Breast epithelium (tissue), 4 donors: ENCODE measurements at regions of chr3 and their contacts with region 1.

Region 1: GRCh38 chr3:88369337-88369736 is 219.6 kb downstream of the C3orf38 start:
- DNase-seq: no peak
- H3K4me3 ChIP-seq: no peak overlapping the region
- H3K27ac ChIP-seq: no peak overlapping the region
- H3K4me1 ChIP-seq: no peaks in the 10 kb centered on the region
- H3K27me3 ChIP-seq: no peaks in the 10 kb centered on the region
- CTCF ChIP-seq: no peak
- POLR2A ChIP-seq: no peak

Region 2: GRCh38 chr3:88398581-88398980 is 29.2 kb after region 1 on chr3:
- intact Hi-C with region 1: loop called (anchors 2 kb)
- DNase-seq: no peak
- H3K4me3 ChIP-seq: no peak overlapping the region
- H3K27ac ChIP-seq: no peak overlapping the region
- H3K4me1 ChIP-seq: no peaks in the 10 kb centered on the region
- H3K27me3 ChIP-seq: no peaks in the 10 kb centered on the region
- CTCF ChIP-seq: no peak
- POLR2A ChIP-seq: no peak